ENCODE measurements at regions of chr14 and their contacts with region 1.

Region 1: GRCh38 chr14:102774391-102775153 is 2.7 kb upstream of the TRAF3 start:
- DNase-seq: peak; percentile 79
- ATAC-seq: peak; percentile 62
- H3K4me3 ChIP-seq: peak overlapping the region in 1 of 3 experiments; percentile 53; a peak in 2 of 6 replicates
- H3K27ac ChIP-seq: peak overlapping the region; percentile 58
- H3K4me1 ChIP-seq: peaks cover 59% of the 10 kb centered on the region
- H3K27me3 ChIP-seq: peaks cover 0 to 18% of the 10 kb centered on the region in 2 experiments; a peak in 2 of 5 replicates
- CTCF ChIP-seq: peak; percentile 78
- EP300 ChIP-seq: peak in 1 of 2 experiments; percentile 61; a peak in 1 of 4 replicates
- POLR2A ChIP-seq: 0 out of 4 replicates have a peak, but pooled peaks of 1 of the 2 experiments have one; percentile 36
- RAD21 ChIP-seq: peak; percentile 21; the same call in 1 of the 2 replicates

Region 2: GRCh38 chr14:102694530-102695166 is 79.9 kb before region 1 on chr14:
- CTCF ChIA-PET with region 1: interaction called, 3 read pairs
- POLR2A ChIA-PET with region 1: no interaction called
- in situ Hi-C with region 1: no loop called
- intact Hi-C with region 1: loop called (anchors 5 kb)
- DNase-seq: peak; percentile 70
- ATAC-seq: peak; percentile 27; the same call in 2 of the 3 replicates
- H3K4me3 ChIP-seq: no peak overlapping the region
- H3K27ac ChIP-seq: no peak overlapping the region
- H3K4me1 ChIP-seq: peaks cover 74% of the 10 kb centered on the region
- H3K27me3 ChIP-seq: no peaks in the 10 kb centered on the region
- CTCF ChIP-seq: peak; percentile 75
- EP300 ChIP-seq: no peak
- POLR2A ChIP-seq: no peak
- RAD21 ChIP-seq: peak; percentile 56; the same call in 1 of the 2 replicates

Region 3: GRCh38 chr14:102726201-102726848 is 48.2 kb before region 1 on chr14:
- CTCF ChIA-PET with region 1: no interaction called
- POLR2A ChIA-PET with region 1: no interaction called
- in situ Hi-C with region 1: no loop called
- intact Hi-C with region 1: loop called (anchors 5 kb)
- DNase-seq: peak; percentile 61
- ATAC-seq: peak; percentile 89
- H3K4me3 ChIP-seq: no peak overlapping the region
- H3K27ac ChIP-seq: peak overlapping the region; percentile 34
- H3K4me1 ChIP-seq: peaks cover 14% of the 10 kb centered on the region
- H3K27me3 ChIP-seq: no peaks in the 10 kb centered on the region
- CTCF ChIP-seq: no peak
- EP300 ChIP-seq: no peak
- POLR2A ChIP-seq: no peak
- RAD21 ChIP-seq: no peak

Region 4: DNA sequence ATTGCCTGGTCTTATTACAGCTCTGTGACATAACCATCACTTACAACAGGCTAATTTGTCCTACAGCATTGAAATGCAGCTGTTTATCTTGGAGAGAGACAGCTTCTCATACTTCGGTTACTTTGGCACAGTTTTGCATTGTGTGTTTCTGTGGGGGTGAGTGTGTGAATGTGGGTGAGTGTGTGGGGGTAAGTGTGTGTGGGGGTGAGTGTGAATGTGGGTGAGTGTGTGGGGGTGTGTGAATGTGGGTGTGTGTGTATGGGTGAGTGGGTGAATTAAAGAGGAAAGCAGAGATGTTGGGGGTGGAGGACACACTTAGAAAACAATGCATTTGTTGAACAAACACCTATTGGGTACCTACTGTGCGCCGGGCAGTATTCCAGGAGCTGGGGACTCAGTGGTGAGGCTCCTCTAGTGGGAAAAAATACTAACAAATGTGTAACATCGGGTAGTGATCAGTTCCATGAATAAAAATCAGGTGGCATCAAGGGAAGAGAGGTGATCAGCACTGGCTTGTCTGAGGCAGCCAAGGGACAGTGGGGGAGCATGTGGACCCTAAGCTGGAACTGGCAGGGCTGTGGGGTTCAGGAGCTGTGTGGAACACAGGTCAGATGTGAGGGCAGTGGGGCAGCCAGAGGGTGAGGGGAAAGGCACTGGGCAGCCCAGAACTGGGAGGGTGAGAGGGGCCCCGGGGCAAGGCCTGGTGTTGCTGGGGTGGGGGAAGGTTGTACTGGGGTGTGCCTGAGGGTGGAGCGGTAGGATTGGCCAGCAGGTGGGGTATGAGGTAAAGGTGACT is 103.8 kb after region 1 on chr14:
- CTCF ChIA-PET with region 1: no interaction called
- POLR2A ChIA-PET with region 1: interaction called, 5 read pairs
- in situ Hi-C with region 1: no loop called
- intact Hi-C with region 1: loop called (anchors 10 kb)
- DNase-seq: no peak
- ATAC-seq: peak; percentile 84
- H3K4me3 ChIP-seq: no peak overlapping the region
- H3K27ac ChIP-seq: no peak overlapping the region
- H3K4me1 ChIP-seq: peaks cover 34% of the 10 kb centered on the region
- H3K27me3 ChIP-seq: no peaks in the 10 kb centered on the region
- CTCF ChIP-seq: peak; percentile 59
- EP300 ChIP-seq: no peak
- POLR2A ChIP-seq: no peak
- RAD21 ChIP-seq: no peak

Region 5: GRCh38 chr14:102917469-102918211 is 143.1 kb after region 1 on chr14:
- CTCF ChIA-PET with region 1: interaction called, 9 read pairs
- POLR2A ChIA-PET with region 1: no interaction called
- in situ Hi-C with region 1: no loop called
- intact Hi-C with region 1: loop called (anchors 5 kb)
- DNase-seq: peak; percentile 24
- ATAC-seq: peak; percentile 4
- H3K4me3 ChIP-seq: no peak overlapping the region
- H3K27ac ChIP-seq: no peak overlapping the region
- H3K4me1 ChIP-seq: peaks cover 29% of the 10 kb centered on the region
- H3K27me3 ChIP-seq: no peaks in the 10 kb centered on the region
- CTCF ChIP-seq: peak; percentile 89
- EP300 ChIP-seq: no peak
- POLR2A ChIP-seq: no peak
- RAD21 ChIP-seq: peak; percentile 72